CD8-positive, alpha-beta T cell (primary cell): ENCODE measurements at regions of chr3 and their contacts with region 1.

Region 1: DNA sequence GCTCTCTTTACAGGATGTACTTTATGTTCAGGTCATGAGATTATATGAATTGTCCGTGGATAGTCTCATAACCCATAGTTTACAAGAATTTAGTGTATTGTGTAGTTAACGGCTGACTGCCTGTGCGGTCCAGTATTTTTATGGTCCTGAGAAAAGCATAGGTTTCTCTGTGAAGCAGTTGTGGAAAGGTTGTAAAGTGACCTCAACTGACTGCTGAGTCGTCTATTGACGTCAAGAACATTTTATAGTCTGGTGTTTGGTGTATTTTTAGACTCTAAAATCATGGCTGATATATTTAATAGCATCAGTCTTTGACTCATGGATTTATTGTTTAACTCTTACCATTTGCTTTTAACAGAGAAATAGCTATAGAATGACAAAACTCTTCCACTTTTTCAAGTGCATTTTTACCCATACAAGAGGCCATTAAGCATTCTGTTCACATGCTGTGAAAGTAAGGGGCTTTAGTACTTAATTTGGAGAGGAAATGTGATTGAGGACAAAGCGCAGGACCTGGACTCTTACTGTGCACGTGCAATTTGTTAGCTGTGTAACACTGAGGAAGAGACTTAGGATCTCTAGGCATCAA is 240.7 kb downstream of the NFKBIZ start:
- DNase-seq: no peak
- ATAC-seq: no peak
- H3K4me3 ChIP-seq: no peak overlapping the region
- H3K4me3 Mint-ChIP-seq: no peak overlapping the region
- H3K27ac ChIP-seq: no peak overlapping the region
- H3K27ac Mint-ChIP-seq: no peak overlapping the region
- H3K4me1 ChIP-seq: peaks cover 14% of the 10 kb centered on the region
- H3K4me1 Mint-ChIP-seq: peaks cover 19% of the 10 kb centered on the region
- H3K27me3 ChIP-seq: no peaks in the 10 kb centered on the region
- H3K27me3 Mint-ChIP-seq: no peaks in the 10 kb centered on the region
- CTCF ChIP-seq: no peak

Region 2: DNA sequence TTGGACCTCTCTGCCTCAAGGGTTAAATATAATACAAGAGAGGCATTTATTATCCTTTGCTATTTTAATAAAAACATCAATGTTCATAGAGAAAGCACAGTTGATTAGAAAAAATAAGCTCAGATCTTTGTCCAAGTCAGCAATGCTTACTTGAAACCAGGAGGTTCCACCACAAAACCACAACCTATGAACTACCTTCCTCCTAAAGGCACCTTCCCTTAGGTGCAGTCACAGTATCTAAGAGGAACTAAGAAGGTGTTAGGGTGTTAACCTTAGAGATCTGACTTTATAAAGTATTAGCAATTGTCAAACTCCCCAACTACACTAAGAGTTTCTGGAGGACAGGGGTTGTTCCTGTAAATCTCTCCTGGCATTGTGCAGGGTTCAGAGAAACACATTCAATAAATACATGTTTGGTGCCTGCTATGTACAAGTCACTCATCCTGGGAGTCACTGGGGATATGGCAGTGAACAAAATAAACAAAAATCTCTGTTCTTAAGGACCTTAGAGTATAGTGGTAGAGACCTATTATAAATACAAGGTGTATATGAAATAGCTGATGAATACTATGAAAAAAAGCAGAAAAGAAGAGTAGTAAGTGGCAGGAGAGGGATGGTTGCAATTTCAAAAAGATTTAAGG is 32.1 kb before region 1 on chr3:
- CTCF ChIA-PET with region 1: interaction called, 3 read pairs
- POLR2A ChIA-PET with region 1: no interaction called
- intact Hi-C with region 1: loop called in 1 of 2 experiments (anchors 5 kb)
- DNase-seq: peak in 4 of 9 experiments; percentile 16 to 82 (median 51)
- ATAC-seq: peak; percentile 98
- H3K4me3 ChIP-seq: no peak overlapping the region
- H3K4me3 Mint-ChIP-seq: peak overlapping the region; percentile 35
- H3K27ac ChIP-seq: peak overlapping the region in 1 of 2 experiments; percentile 31
- H3K27ac Mint-ChIP-seq: peak overlapping the region; percentile 84
- H3K4me1 ChIP-seq: peaks cover 33% of the 10 kb centered on the region
- H3K4me1 Mint-ChIP-seq: peaks cover 33% of the 10 kb centered on the region
- H3K27me3 ChIP-seq: no peaks in the 10 kb centered on the region
- H3K27me3 Mint-ChIP-seq: no peaks in the 10 kb centered on the region
- CTCF ChIP-seq: no peak